Ovary (tissue), 10 donors: ENCODE measurements at regions of chr2 and their contacts with region 1.

Region 1: DNA sequence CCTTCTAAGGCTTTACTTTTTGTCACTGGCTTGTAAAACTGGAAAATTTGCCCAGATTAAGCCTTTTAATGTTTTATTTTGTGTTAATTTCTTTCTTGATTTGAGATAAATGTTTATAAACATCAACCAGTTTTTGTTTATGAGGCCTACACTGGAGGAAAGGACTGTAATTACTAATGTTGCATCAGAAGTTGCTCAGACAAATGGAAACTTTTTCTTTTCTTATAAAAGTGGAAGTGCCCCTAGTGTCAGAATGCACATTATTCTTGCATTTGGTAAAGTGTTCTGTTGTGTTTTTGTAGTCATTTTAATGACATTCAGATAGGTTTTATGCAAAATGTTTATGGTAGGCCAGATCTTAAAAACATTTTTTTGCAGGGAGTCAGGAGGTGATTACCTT is 25.3 kb downstream of the LCLAT1 start:
- DNase-seq: no peak
- H3K4me3 ChIP-seq: no peak overlapping the region
- H3K27ac ChIP-seq: no peak overlapping the region
- H3K4me1 ChIP-seq: peaks cover 2% of the 10 kb centered on the region
- H3K27me3 ChIP-seq: no peaks in the 10 kb centered on the region
- CTCF ChIP-seq: no peak
- EP300 ChIP-seq: no peak
- POLR2A ChIP-seq: no peak

Region 2: GRCh38 chr2:30165050-30165520 is 307.2 kb before region 1 on chr2:
- intact Hi-C with region 1: loop called in 1 of 4 experiments (anchors 10 kb)
- DNase-seq: peak in 3 of 5 donors; percentile 30 to 62 (median 41)
- H3K4me3 ChIP-seq: no peak overlapping the region
- H3K27ac ChIP-seq: no peak overlapping the region
- H3K4me1 ChIP-seq: no peaks in the 10 kb centered on the region
- H3K27me3 ChIP-seq: no peaks in the 10 kb centered on the region
- CTCF ChIP-seq: peak; percentile 78 to 85 (median 79)
- EP300 ChIP-seq: no peak
- POLR2A ChIP-seq: no peak

Region 3: DNA sequence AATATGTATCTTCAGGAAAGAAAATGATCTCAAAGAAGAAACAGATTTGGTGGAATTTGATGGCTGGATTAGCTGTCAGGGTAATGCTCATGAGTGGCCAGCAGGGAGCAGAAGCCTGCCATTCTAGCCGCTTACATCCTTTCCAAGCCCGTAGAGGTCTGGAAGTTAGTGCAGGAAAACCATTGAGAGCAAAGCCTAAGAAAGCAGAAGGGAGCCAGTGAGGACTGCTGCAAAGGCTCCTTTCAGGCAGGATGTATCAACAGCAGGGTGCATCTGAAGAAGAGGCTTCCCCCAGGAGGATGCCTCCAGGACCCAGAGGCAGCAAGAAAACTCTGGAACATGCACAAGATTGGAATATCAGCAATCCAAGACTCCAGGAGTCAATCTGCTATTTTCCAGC is 263.9 kb before region 1 on chr2:
- intact Hi-C with region 1: loop called in 2 of 4 experiments (anchors 5 to 10 kb)
- DNase-seq: peak; percentile 60 to 79 (median 72)
- H3K4me3 ChIP-seq: no peak overlapping the region
- H3K27ac ChIP-seq: no peak overlapping the region
- H3K4me1 ChIP-seq: peaks cover 1% of the 10 kb centered on the region
- H3K27me3 ChIP-seq: no peaks in the 10 kb centered on the region
- CTCF ChIP-seq: peak; percentile 85 to 95 (median 90)
- EP300 ChIP-seq: no peak
- POLR2A ChIP-seq: no peak

Region 4: DNA sequence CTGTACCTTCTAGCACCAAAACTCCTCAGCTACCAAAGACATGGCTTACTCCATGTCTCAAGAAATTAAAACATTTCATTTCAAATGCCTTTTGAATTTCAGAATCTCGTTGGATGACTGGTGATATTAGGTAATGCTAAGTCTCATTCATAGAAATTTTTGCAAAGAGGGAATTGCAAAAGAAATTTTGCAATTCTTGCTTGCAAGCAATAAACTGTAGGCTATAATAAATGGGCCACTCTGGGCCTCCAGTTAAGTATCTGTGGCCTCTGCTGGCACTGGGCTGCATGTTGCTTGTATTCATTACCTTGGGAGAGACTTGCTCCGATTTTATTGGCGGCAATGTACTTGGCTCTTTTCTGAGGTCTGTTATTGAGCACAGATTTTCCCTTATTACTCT is 28.1 kb before region 1 on chr2:
- intact Hi-C with region 1: loop called in 1 of 4 experiments (anchors 2 kb)
- DNase-seq: no peak
- H3K4me3 ChIP-seq: no peak overlapping the region
- H3K27ac ChIP-seq: no peak overlapping the region
- H3K4me1 ChIP-seq: peaks cover 6% of the 10 kb centered on the region
- H3K27me3 ChIP-seq: no peaks in the 10 kb centered on the region
- CTCF ChIP-seq: no peak
- EP300 ChIP-seq: no peak
- POLR2A ChIP-seq: no peak

Region 5: GRCh38 chr2:31440764-31441163 is 968.4 kb after region 1 on chr2:
- intact Hi-C with region 1: no loop called
- DNase-seq: no peak
- H3K4me3 ChIP-seq: no peak overlapping the region
- H3K27ac ChIP-seq: no peak overlapping the region
- H3K4me1 ChIP-seq: no peaks in the 10 kb centered on the region
- H3K27me3 ChIP-seq: no peaks in the 10 kb centered on the region
- CTCF ChIP-seq: no peak
- EP300 ChIP-seq: no peak
- POLR2A ChIP-seq: no peak